ENCODE measurements at regions of chr19 and their contacts with region 1.

Region 1: GRCh38 chr19:48492925-48493717 is 18.5 kb downstream of the LMTK3 start:
- DNase-seq: peak; percentile 95 to 100
- ATAC-seq: peak; percentile 67 to 85
- H3K4me3 ChIP-seq: peak overlapping the region; percentile 65
- H3K27ac ChIP-seq: peak overlapping the region; percentile 86 to 94
- H3K4me1 ChIP-seq: peaks cover 50% of the 10 kb centered on the region
- CTCF ChIP-seq: no peak
- EP300 ChIP-seq: no peak
- POLR2A ChIP-seq: peak; percentile 89
- RAD21 ChIP-seq: no peak

Region 2: GRCh38 chr19:48469289-48469881 is 23.7 kb before region 1 on chr19 and contains the start of gene CYTH2:
- CTCF ChIA-PET with region 1: interaction called, 58 read pairs
- POLR2A ChIA-PET with region 1: interaction called, 6 read pairs
- DNase-seq: peak; percentile 70 to 84
- ATAC-seq: peak; percentile 62 to 82
- H3K4me3 ChIP-seq: peak within 1 kb of the TSS; percentile 82
- H3K27ac ChIP-seq: peak within 1 kb of the TSS; percentile 94 to 96
- H3K4me1 ChIP-seq: peaks cover 24% of the 10 kb centered on the region
- CTCF ChIP-seq: no peak
- EP300 ChIP-seq: no peak
- POLR2A ChIP-seq: peak; percentile 81
- RAD21 ChIP-seq: no peak; a peak in 2 of 5 replicates
- polyA plus RNA-seq, gene CYTH2: 33.4 and 36.9 TPM in 2 replicates

Region 3: GRCh38 chr19:48513289-48514122 is 20.4 kb after region 1 on chr19:
- CTCF ChIA-PET with region 1: interaction called, 145 read pairs
- POLR2A ChIA-PET with region 1: interaction called, 5 read pairs
- DNase-seq: peak; percentile 92 to 94
- ATAC-seq: peak; percentile 76 to 86
- H3K4me3 ChIP-seq: peak overlapping the region; percentile 59
- H3K27ac ChIP-seq: peak overlapping the region; percentile 92 to 93
- H3K4me1 ChIP-seq: peaks cover 34% of the 10 kb centered on the region
- CTCF ChIP-seq: no peak
- EP300 ChIP-seq: no peak
- POLR2A ChIP-seq: peak; percentile 48
- RAD21 ChIP-seq: peak; percentile 2 to 45; a peak in 4 of 5 replicates

Region 4: GRCh38 chr19:48553676-48554386 is 60.7 kb after region 1 on chr19:
- CTCF ChIA-PET with region 1: interaction called, 100 read pairs
- POLR2A ChIA-PET with region 1: interaction called, 11 read pairs
- DNase-seq: peak; percentile 94 to 99
- ATAC-seq: peak; percentile 64 to 74
- H3K4me3 ChIP-seq: no peak overlapping the region
- H3K27ac ChIP-seq: peak overlapping the region; percentile 97 to 100
- H3K4me1 ChIP-seq: peaks cover 72% of the 10 kb centered on the region
- CTCF ChIP-seq: no peak; the same call in 2 of the 3 replicates
- EP300 ChIP-seq: peak; percentile 91 to 98; a peak in 3 of 5 replicates
- POLR2A ChIP-seq: no peak
- RAD21 ChIP-seq: peak in 1 of 2 experiments; percentile 71; a peak in 4 of 5 replicates

Region 5: DNA sequence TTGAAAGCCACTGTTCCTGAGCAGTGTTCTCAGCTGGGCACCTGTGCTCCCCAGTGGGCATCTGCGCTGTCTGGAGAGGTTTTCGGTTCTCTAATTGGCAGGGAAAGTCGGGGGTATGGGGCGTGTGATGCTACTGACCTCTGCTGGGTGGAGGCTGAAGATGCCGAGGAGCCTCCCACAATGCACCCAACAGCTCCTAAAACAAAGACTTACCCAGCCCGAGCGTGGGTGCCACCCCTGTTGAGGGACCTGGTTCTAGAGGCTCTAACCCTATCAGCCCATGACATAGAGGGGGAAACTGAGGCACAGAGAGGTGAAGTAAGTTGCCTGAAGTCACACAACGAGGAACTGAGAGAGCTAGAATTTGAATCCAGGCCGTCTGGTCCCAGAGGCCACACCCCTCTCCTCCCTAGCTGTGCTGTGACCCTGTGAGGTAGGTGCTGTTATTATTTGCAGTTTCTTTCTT is 115.7 kb after region 1 on chr19:
- CTCF ChIA-PET with region 1: interaction called, 83 read pairs
- POLR2A ChIA-PET with region 1: interaction called, 12 read pairs
- DNase-seq: peak; percentile 83 to 88
- ATAC-seq: peak; percentile 75 to 82
- H3K4me3 ChIP-seq: no peak overlapping the region
- H3K27ac ChIP-seq: peak overlapping the region; percentile 65 to 78
- H3K4me1 ChIP-seq: peaks cover 5% of the 10 kb centered on the region; the same call in 1 of the 3 replicates
- CTCF ChIP-seq: peak; percentile 92
- EP300 ChIP-seq: no peak
- POLR2A ChIP-seq: no peak
- RAD21 ChIP-seq: peak; percentile 94 to 98